MCF 10A (cell line): ENCODE measurements at regions of chr16 and their contacts with region 1.

Region 1: GRCh38 chr16:81737885-81738786 is 41.0 kb upstream of the PLCG2 start:
- DNase-seq: peak; percentile 96
- H3K4me3 Mint-ChIP-seq: peak overlapping the region; percentile 52
- H3K27ac Mint-ChIP-seq: peak overlapping the region; percentile 51
- H3K4me1 Mint-ChIP-seq: no peaks in the 10 kb centered on the region
- H3K27me3 Mint-ChIP-seq: no peaks in the 10 kb centered on the region
- CTCF ChIP-seq: peak; percentile 86

Region 2: GRCh38 chr16:81006814-81007696 is 731.1 kb before region 1 on chr16 and contains the starts of genes CENPN and CMC2:
- CTCF ChIA-PET with region 1: interaction called, 18 read pairs
- POLR2A ChIA-PET with region 1: no interaction called
- intact Hi-C with region 1: loop called (anchors 10 kb)
- DNase-seq: peak; percentile 98
- H3K4me3 Mint-ChIP-seq: peak within 1 kb of the TSS; percentile 99
- H3K27ac Mint-ChIP-seq: peak within 1 kb of the TSS; percentile 99
- H3K4me1 Mint-ChIP-seq: peaks cover 38% of the 10 kb centered on the region
- H3K27me3 Mint-ChIP-seq: no peaks in the 10 kb centered on the region
- CTCF ChIP-seq: no peak
- total RNA-seq, gene CENPN: 29.5 and 38.4 TPM in 2 replicates
- total RNA-seq, gene CMC2: 83.0 and 102 TPM in 2 replicates

Region 3: DNA sequence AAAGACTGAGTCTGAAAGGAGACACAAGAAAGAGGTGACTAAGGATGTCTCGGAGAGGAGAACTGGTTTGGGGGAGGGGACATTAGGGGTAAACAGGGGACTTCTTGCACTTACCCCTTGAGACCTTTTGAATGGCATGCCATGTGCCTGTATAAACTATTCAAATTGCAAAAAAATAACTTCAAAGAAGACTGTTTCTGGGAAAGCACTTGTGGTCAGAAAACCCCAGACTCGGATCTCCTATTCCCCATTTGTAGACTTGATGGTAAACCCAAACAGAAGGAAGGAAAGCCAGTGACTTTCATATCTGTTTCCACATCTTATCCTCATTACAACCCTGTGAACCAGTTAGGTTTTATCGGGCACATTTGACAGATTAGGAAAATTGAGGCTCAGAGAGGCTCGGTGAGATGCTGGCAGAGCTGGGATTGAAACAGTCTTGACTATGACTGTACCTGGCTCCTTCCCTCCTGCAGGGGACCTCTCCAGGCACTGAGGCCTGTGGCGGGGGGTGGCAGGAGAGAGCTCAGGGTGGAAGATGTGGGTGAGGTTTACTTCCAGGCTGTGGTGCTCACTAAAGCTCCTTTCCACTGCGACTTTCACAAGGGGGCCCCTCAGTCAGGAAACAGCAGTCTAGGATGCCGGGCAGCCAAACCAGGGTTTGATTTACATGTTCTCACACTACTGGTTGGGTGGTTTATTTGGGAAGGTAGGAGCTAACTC is 10.5 kb after region 1 on chr16:
- CTCF ChIA-PET with region 1: interaction called, 10 read pairs
- POLR2A ChIA-PET with region 1: no interaction called
- intact Hi-C with region 1: no loop called
- DNase-seq: no peak
- H3K4me3 Mint-ChIP-seq: no peak overlapping the region
- H3K27ac Mint-ChIP-seq: no peak overlapping the region
- H3K4me1 Mint-ChIP-seq: no peaks in the 10 kb centered on the region
- H3K27me3 Mint-ChIP-seq: no peaks in the 10 kb centered on the region
- CTCF ChIP-seq: no peak